ENCODE measurements at regions of chr19 and their contacts with region 1.

Region 1: DNA sequence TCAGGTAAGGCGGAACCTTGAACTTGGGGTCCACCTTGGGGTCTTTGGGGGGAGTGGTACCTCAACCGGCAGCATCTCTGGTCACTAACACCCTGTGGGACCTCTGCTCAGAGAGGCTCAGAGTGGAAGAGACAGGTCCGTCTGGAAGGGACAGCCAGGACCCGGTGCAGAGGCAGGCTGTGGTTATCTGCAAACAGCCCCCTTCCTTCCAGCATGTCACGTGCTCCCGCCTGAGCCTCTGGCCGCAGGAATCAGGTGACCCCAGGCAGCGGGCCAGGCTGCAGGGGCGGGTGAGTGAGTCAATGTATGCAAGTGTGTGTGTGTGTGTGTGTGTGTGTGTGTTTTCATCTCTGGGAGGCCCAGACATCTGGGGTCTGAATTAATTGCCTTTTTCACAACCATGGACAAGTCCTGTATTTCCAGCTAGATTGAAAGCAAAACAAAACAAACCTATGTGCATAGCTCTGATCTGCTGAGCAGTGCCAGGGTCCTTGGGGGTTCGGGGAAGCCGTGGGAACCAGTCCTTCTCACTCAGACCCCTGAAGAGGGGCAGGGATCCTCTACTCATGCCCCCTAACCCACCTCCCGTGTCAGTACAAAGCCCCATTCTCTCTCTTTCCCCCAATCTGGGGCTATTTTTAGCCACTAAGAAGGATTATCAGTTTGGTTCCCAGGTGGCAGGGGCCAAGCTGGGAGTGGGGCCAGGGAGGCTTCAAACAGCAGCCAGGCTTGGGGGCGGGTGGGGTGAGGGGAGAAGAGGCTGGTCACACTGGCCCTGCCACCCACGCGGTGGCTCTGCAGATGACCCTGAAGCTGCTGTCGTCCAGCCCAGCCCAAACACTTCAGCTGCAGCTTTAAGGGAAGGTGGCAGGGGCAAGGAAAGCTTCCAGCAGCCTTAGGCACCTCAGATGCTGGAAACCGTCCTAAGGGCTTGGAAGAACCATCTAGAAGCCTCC is 31.4 kb downstream of the CERS4 start:
- DNase-seq: peak; percentile 76
- ATAC-seq: peak; percentile 89
- H3K4me3 Mint-ChIP-seq: no peak overlapping the region
- H3K27ac Mint-ChIP-seq: peak overlapping the region; percentile 85
- H3K4me1 Mint-ChIP-seq: peaks cover 19% of the 10 kb centered on the region
- H3K27me3 Mint-ChIP-seq: no peaks in the 10 kb centered on the region
- CTCF ChIP-seq: no peak

Region 2: DNA sequence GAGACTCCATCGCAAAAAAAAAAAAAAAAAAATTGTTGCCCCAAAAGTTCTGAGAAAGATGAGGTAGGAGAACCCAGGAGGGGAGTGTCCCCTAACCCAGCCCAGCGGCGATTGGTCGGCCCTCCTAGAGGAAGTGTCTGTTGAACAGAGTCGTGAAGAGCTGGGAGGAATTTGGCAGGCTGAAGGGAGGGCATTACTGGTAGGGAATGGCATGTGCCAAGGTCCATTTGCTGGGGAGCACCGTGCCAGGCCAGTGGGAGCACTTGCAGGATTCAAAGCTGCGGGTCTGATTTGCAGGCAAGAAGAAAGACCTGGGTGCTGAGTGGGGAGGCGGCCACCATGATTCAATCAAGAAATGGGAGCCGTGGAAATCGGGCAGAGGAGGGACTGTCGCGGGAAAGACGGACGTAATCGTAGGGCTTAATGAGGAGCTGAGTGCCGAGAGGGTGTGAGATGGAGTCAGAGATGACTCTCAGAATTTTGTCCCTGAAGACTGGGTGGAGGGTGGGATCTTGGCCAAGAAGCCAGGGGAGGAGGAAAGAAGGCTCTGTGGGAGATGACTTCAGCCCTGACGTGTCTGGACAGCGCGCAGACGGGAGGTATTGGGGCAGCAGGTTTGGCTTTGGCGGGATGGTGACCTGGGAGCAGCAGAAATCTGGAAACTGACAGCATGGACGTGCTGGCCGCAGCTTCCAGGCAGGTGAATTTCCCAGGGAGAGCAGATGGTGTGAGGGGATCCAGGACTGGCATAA is 16.0 kb before region 1 on chr19:
- CTCF ChIA-PET with region 1: interaction called, 3 read pairs
- POLR2A ChIA-PET with region 1: interaction called, 10 read pairs
- DNase-seq: no peak
- ATAC-seq: 0 out of 2 replicates have a peak, but pooled peaks have one; percentile 20
- H3K4me3 Mint-ChIP-seq: no peak overlapping the region
- H3K27ac Mint-ChIP-seq: peak overlapping the region; percentile 94
- H3K4me1 Mint-ChIP-seq: peaks cover 13% of the 10 kb centered on the region
- H3K27me3 Mint-ChIP-seq: no peaks in the 10 kb centered on the region
- CTCF ChIP-seq: no peak